Activated CD4-positive, alpha-beta T cell treated with anti-CD3 and anti-CD28 coated beads for 36 hours (primary cell): ENCODE measurements at regions of chr19 and their contacts with region 1.

Region 1: GRCh38 chr19:42471554-42472249 is 29.0 kb upstream of the CXCL17 start:
- DNase-seq: no peak
- ATAC-seq: no peak
- H3K4me3 Mint-ChIP-seq: no peak overlapping the region
- H3K27ac Mint-ChIP-seq: no peak overlapping the region
- H3K4me1 Mint-ChIP-seq: peaks cover 14% of the 10 kb centered on the region
- H3K27me3 Mint-ChIP-seq: peaks cover 4% of the 10 kb centered on the region

Region 2: GRCh38 chr19:42540071-42540553 is 68.4 kb after region 1 on chr19:
- CTCF ChIA-PET with region 1: no interaction called
- POLR2A ChIA-PET with region 1: no interaction called
- intact Hi-C with region 1: no loop called
- DNase-seq: no peak
- ATAC-seq: no peak
- H3K4me3 Mint-ChIP-seq: no peak overlapping the region
- H3K27ac Mint-ChIP-seq: no peak overlapping the region
- H3K4me1 Mint-ChIP-seq: no peaks in the 10 kb centered on the region
- H3K27me3 Mint-ChIP-seq: peaks cover 2% of the 10 kb centered on the region

Region 3: DNA sequence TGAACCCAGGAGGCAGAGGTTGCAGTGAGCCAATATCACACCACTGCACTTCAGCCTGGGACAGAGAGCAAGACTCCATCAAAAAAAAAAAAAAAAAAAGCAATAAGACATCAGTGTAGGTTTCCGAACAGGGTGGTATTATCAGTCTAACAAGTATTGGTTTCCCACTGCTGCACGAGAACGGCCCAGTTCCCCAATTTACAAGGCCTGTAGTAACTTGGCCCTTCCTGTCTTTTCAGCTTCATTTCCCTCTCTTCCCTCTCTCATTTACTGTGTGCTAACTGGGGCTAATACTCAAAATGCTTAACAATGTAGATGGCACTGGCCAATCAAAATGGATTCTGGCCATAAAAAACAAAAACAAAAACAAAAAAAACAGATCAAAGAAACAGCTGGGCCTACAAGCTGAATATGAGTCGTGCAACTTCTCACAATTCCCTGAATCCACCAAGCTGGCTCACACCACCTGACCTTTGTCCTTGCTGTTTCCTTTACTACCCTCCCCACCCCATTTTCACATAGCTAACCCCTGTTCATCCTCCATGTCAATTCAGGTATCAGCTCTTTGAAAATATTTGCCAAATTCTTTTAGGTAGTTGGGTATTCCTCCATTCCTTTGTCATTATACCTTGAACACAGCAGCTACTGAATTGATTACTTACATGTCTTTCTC is 945.4 kb after region 1 on chr19:
- CTCF ChIA-PET with region 1: no interaction called
- POLR2A ChIA-PET with region 1: interaction called, 10 read pairs
- intact Hi-C with region 1: no loop called
- DNase-seq: no peak
- ATAC-seq: no peak
- H3K4me3 Mint-ChIP-seq: no peak overlapping the region
- H3K27ac Mint-ChIP-seq: no peak overlapping the region
- H3K4me1 Mint-ChIP-seq: no peaks in the 10 kb centered on the region
- H3K27me3 Mint-ChIP-seq: no peaks in the 10 kb centered on the region